ENCODE measurements at regions of chr5 and their contacts with region 1.

Region 1: DNA sequence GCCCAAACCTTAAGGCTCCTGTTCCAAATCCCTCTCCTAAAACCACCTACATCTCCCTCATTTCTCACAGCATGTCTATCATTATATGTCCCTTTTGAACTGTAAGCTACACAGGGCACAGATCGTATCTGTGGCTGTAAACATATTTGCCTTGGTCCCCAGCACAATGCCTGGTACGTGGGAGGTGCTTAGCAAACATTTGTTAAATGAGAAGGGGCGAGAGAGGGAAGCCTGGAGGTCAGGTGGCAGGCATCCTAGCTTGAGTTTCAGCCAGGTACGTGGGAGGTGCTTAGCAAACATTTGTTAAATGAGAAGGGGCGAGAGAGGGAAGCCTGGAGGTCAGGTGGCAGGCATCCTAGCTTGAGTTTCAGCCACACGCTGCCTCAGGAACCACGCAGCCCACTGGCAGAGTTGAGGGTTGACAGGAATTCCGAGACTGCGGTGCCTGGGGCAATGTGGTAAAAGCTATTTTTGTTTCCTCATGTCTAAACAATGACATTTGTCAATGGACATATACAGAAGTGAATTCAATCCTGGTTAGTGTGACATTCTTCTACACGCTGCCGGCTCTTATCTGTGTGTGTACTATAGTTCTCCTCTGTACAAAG is 113.6 kb downstream of the EFNA5 start:
- DNase-seq: peak; percentile 42 to 64
- ATAC-seq: peak; percentile 78 to 95 (median 90)
- H3K4me3 ChIP-seq: no peak overlapping the region
- H3K27ac ChIP-seq: peak overlapping the region in 9 of 10 donors; percentile 42 to 87 (median 75)
- H3K4me1 ChIP-seq: peaks cover 0 to 29% (median 0%) of the 10 kb centered on the region in 9 donors
- H3K27me3 ChIP-seq: no peaks in the 10 kb centered on the region
- CTCF ChIP-seq: peak in 1 of 9 donors; percentile 10

Region 2: DNA sequence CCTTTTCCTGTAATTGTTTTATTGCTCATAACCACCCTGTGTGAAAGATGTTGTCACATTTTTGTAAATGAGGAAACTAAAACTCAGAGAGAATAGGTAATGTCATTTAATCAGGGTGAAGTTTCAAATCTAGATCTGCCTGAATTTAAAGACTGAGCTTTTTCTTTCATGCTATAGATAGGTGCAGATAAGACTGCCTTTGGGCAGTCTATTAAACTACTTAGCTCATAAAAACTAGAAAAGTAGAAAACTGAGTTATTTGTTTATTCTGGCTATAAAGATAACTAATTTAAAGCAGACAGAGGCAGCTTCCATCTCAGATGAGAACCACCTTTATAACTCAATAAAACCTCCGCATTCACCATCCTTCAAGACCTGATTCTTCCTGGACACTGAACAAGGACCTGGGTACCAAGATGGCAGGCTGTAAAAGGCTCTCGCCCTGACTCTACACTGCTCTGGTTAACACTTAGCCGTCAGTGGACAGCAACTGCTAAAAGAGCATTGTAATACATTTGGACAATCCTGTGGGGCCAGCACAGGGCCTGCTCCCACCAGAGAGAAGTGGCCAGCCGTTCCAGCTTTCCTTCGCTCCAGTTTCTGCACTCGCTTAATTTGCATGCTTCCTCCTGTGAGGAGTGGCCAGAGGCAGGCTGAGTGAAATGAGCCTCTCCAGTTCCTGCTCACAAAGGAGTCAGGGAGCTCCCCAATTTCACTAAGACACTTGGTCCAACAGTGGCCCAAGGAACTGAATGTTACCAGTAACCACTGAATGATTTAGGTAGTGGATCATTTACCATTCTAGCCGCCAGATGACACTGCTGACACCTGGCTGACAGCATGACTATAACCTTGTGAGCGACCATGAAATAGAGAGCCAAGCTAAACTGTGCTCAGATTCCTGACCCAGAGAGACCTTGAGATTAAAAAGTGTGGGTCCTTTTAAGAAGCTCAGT is 452.8 kb before region 1 on chr5:
- intact Hi-C with region 1: loop called in 1 of 10 experiments (anchors 10 kb)
- DNase-seq: peak in 1 of 2 donors; percentile 16
- ATAC-seq: peak; percentile 69 to 96 (median 83)
- H3K4me3 ChIP-seq: no peak overlapping the region
- H3K27ac ChIP-seq: peak overlapping the region in 6 of 10 donors; percentile 24 to 55 (median 44)
- H3K4me1 ChIP-seq: no peaks in the 10 kb centered on the region
- H3K27me3 ChIP-seq: no peaks in the 10 kb centered on the region
- CTCF ChIP-seq: peak in 7 of 9 donors; percentile 19 to 57 (median 44)

Region 3: DNA sequence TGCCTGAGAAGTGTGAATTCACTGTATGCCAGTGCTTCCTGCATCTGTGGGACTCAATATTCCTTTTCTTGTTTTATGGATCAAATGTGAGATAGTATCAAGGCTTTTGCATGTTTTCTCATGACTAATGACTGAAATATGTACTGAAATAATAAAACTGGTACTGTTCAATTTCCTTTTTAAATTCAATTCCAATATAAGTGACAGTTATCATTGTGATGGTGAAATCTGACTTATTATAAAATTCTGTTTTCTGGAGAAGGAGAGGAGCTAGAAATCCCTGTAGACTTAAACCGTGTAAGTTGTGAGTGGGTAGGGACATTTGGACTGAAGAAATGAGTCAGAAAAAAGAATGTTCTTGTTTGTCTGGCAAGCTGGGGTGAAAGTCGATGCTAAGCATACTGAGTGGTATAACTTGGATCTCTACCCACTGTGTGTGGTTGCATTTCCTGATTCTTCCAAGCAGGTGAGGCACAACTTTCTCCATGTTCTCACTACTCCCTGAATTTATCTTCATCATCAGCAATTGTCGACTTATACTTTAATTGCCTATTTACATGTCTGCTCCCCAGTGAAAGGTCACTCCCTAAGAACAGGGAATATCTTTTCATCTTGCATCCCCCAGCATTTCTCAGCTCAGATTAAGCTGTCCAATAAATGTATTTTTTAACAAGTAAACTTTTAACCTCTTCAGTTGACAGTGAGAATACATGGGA is 131.5 kb before region 1 on chr5:
- intact Hi-C with region 1: loop called in 1 of 10 experiments (anchors 10 kb)
- DNase-seq: no peak
- ATAC-seq: no peak
- H3K4me3 ChIP-seq: no peak overlapping the region
- H3K27ac ChIP-seq: no peak overlapping the region
- H3K4me1 ChIP-seq: peaks cover 0 to 19% (median 10%) of the 10 kb centered on the region in 9 donors
- H3K27me3 ChIP-seq: no peaks in the 10 kb centered on the region
- CTCF ChIP-seq: no peak

Region 4: DNA sequence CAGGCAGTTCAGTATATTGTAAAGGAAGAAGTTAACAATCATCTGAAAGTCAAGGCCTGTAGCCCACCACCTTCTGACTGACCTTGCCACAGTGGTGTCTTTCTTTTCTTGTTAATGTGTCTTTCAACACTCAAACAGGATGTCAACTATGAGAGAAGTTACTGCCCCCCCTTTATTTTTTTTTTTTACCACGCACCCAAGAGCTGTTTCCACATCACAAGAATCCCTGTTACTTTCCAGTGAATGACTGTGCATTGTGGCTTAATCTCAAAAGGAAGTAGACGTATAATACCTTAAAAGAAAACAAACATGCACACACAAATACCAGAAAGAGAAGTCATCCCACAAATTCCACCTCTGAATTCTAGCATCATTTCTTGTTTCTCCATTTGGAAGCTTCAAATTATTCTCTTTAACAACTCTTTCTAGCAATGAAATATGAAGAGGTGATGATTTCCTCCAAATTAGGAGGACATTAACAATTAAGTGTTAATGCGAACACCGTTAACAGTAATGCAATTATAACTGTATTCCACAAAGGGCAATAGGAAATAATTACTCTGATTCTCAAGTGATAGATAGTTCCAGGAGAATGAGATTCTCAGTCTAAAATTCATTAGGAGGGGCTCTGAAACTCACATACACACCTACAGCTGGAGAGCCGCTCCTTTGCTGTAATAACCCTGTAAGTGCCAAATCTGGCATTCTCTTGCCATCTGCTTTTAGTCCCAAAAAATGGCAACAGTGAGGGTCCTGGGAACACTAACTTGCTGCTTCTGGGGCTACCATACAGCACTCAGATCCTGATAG is 87.5 kb before region 1 on chr5:
- intact Hi-C with region 1: loop called in 1 of 10 experiments (anchors 10 kb)
- DNase-seq: no peak
- ATAC-seq: peak in 2 of 8 donors; percentile 23 to 29
- H3K4me3 ChIP-seq: no peak overlapping the region
- H3K27ac ChIP-seq: peak overlapping the region in 8 of 10 donors; percentile 8 to 66 (median 50)
- H3K4me1 ChIP-seq: peaks cover 0 to 60% (median 28%) of the 10 kb centered on the region in 9 donors
- H3K27me3 ChIP-seq: no peaks in the 10 kb centered on the region
- CTCF ChIP-seq: no peak